AG04450 (cell line): ENCODE measurements at regions of chr3 and their contacts with region 1.

Region 1: DNA sequence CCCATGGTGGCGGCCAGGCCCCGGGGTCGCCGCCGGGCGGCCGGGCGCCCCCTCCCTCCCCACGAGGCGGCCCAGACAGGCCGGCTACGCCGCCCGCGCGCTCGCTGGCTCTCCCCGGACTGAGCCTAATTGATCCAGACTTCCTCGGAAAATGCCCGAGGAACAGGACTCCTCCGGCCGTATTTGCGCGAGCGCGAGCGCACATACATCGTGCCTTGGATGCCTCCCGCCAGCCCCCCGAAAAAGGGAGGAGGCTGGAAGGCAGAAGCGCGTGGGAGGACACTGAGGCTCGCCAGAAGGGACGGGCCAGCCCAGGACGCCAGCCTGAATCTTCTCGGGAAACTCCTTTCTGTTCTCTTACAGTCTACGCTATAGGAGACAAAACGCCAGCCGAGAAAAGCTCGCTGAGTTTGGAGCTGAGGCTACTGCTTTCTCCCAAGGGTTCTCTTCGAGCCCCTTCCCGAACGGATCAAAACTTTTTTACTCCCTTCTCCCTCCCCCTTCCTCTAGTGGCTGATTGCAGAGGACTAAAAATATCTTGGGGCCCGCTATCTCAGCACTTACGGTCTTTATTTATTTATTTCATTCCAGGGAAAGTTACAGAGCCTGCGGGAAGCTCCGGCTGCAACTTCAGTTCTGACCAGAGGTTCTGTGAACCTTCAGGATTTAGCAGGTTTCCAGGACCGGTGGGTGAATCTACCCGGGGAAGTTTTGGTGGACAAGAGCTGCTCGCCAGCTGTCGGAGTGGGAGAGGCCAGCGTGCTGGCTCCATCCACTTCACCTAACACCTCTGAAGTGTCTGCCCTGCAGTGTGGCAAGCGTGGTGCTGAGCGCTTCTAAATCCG is at the start of gene PDZRN3:
- DNase-seq: no peak
- H3K4me3 ChIP-seq: peak within 1 kb of the TSS; percentile 89
- H3K27ac ChIP-seq: no peak within 1 kb of the TSS
- H3K27me3 ChIP-seq: no peaks in the 10 kb centered on the region
- CTCF ChIP-seq: no peak
- polyA plus RNA-seq, gene PDZRN3: 14.7 and 22.7 TPM in 2 replicates

Region 2: GRCh38 chr3:73547427-73548248 is 77.4 kb before region 1 on chr3:
- CTCF ChIA-PET with region 1: interaction called, 3 read pairs
- POLR2A ChIA-PET with region 1: interaction called, 17 read pairs
- DNase-seq: peak; percentile 82
- H3K4me3 ChIP-seq: no peak overlapping the region; the same call in 1 of the 2 replicates
- H3K27ac ChIP-seq: peak overlapping the region; percentile 99
- H3K27me3 ChIP-seq: no peaks in the 10 kb centered on the region
- CTCF ChIP-seq: no peak

Region 3: GRCh38 chr3:73765878-73766545 is 141.0 kb after region 1 on chr3:
- CTCF ChIA-PET with region 1: no interaction called
- POLR2A ChIA-PET with region 1: interaction called, 10 read pairs
- DNase-seq: no peak
- H3K4me3 ChIP-seq: no peak overlapping the region
- H3K27ac ChIP-seq: peak overlapping the region; percentile 90
- H3K27me3 ChIP-seq: no peaks in the 10 kb centered on the region
- CTCF ChIP-seq: no peak